Activated B cell treated with CpG ODN at 0.5 μM for 24 hours (primary cell): ENCODE measurements at regions of chr21 and their contacts with region 1.

Region 1: GRCh38 chr21:36976882-36977651 is 10.6 kb upstream of the HLCS start:
- DNase-seq: peak; percentile 30
- ATAC-seq: peak; percentile 84
- H3K4me3 Mint-ChIP-seq: peak overlapping the region; percentile 48
- H3K27ac Mint-ChIP-seq: peak overlapping the region; percentile 57
- H3K4me1 Mint-ChIP-seq: peaks cover 24% of the 10 kb centered on the region
- H3K27me3 Mint-ChIP-seq: peaks cover 4% of the 10 kb centered on the region
- CTCF ChIP-seq: no peak

Region 2: DNA sequence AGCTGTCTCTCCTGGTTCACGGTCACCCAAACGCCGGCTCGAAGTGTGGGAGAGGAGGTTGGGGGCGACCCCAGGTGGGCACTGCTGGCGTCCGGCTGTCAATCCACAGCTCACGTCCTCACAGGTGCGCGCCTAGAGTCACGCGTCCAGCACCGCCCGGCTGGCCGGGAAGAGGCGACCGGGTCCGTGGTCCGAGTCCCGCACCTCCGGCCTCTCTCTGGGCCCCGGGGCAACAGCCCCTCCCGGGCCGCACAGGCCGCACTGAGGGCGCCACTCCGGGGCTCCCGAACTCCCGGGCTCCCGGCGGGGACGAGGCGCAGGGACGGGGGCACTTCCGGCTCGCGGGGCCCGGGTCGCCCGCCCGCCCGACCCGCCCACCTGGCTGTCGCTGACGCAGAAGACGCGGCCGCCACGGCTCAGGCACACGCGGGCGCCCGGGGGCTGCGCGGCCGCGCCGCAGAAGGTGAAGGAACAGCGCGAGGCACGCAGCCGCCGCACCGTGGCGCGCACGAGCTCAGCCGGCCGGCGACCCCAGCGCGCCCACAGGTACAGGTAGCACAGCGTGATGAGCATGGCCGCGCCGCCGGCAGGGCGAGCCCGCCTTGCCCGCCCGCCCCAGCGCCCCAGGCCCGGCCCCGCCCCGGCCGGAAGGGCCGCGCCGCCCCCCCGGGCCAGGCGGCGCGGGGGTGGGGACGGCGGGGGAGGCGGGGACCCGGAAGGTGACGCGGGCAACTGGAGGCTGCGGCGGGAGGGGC is 10.8 kb before region 1 on chr21 and contains the start of gene HLCS:
- CTCF ChIA-PET with region 1: interaction called, 16 read pairs
- POLR2A ChIA-PET with region 1: interaction called, 15 read pairs
- intact Hi-C with region 1: no loop called
- DNase-seq: peak; percentile 77
- ATAC-seq: peak; percentile 92
- H3K4me3 Mint-ChIP-seq: peak within 1 kb of the TSS; percentile 85
- H3K27ac Mint-ChIP-seq: peak within 1 kb of the TSS; percentile 80
- H3K4me1 Mint-ChIP-seq: peaks cover 20% of the 10 kb centered on the region
- H3K27me3 Mint-ChIP-seq: no peaks in the 10 kb centered on the region
- CTCF ChIP-seq: no peak
- total RNA-seq, gene HLCS: 8.1 and 10.6 TPM in 2 replicates

Region 3: GRCh38 chr21:36989699-36990507 is 12.8 kb after region 1 on chr21:
- CTCF ChIA-PET with region 1: interaction called, 24 read pairs
- POLR2A ChIA-PET with region 1: interaction called, 21 read pairs
- intact Hi-C with region 1: loop called (anchors 1 kb)
- DNase-seq: peak; percentile 91
- ATAC-seq: peak; percentile 92
- H3K4me3 Mint-ChIP-seq: peak overlapping the region; percentile 83
- H3K27ac Mint-ChIP-seq: peak overlapping the region; percentile 80
- H3K4me1 Mint-ChIP-seq: peaks cover 10% of the 10 kb centered on the region
- H3K27me3 Mint-ChIP-seq: no peaks in the 10 kb centered on the region
- CTCF ChIP-seq: peak; percentile 27

Region 4: DNA sequence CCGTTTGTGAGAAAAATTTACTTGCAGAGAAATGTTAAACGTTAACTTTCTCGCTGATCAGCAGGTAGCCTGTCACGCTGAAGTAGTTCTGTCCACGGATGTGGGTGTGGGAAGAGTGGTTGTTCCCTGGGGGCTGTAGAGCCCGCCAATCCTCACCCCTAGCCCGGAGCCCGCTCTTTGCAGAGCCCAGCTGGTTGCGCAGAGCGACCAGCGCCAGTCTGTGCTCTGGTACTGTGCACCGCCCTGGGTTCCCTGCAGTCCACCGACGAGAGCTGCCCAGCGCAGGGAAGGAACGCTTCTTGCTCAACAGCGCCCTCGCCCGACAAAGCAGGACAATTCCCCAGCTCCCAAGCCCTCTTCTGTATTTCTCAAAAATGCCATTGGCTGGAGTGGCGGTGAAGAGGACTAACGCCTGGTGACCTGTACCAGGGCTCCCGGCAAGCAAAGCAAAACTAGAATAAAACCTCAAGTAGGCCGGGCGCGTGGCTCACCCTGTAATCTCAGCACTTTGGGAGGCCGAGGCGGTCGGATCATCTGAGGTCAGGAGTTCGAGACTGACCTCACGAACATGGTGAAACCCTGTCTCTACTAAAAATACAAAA is 32.8 kb after region 1 on chr21:
- CTCF ChIA-PET with region 1: interaction called, 11 read pairs
- POLR2A ChIA-PET with region 1: no interaction called
- intact Hi-C with region 1: loop called (anchors 1 kb)
- DNase-seq: peak; percentile 62
- ATAC-seq: peak; percentile 85
- H3K4me3 Mint-ChIP-seq: peak overlapping the region; percentile 39
- H3K27ac Mint-ChIP-seq: no peak overlapping the region
- H3K4me1 Mint-ChIP-seq: peaks cover 19% of the 10 kb centered on the region
- H3K27me3 Mint-ChIP-seq: peaks cover 46% of the 10 kb centered on the region
- CTCF ChIP-seq: no peak

Region 5: GRCh38 chr21:37087188-37087587 is 110.1 kb after region 1 on chr21:
- CTCF ChIA-PET with region 1: interaction called, 3 read pairs
- POLR2A ChIA-PET with region 1: no interaction called
- intact Hi-C with region 1: loop called (anchors 1 kb)
- DNase-seq: no peak
- ATAC-seq: no peak
- H3K4me3 Mint-ChIP-seq: no peak overlapping the region
- H3K27ac Mint-ChIP-seq: no peak overlapping the region
- H3K4me1 Mint-ChIP-seq: peaks cover 17% of the 10 kb centered on the region
- H3K27me3 Mint-ChIP-seq: no peaks in the 10 kb centered on the region
- CTCF ChIP-seq: no peak

Region 6: DNA sequence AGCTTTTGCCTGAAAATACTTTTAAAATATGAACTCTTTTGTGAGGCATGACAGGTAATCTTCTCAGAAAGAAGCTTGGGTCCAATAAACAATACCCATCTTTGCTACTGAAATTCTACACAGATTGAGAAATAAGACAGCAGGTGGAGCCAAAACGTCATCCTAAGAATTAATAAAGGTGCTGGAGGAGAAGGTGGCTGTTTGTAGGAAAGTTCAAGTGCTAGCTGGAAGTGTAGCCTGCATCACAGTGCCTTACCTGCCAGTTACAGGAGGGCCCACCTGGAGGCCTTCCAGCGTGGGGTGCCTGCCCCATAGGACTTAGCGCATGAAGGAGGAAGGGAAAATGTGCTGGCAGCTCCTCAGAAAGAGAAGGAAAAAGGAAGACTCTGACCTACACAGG is 189.7 kb after region 1 on chr21:
- CTCF ChIA-PET with region 1: no interaction called
- POLR2A ChIA-PET with region 1: no interaction called
- intact Hi-C with region 1: loop called (anchors 10 kb)
- DNase-seq: no peak
- ATAC-seq: no peak
- H3K4me3 Mint-ChIP-seq: no peak overlapping the region
- H3K27ac Mint-ChIP-seq: peak overlapping the region; percentile 19
- H3K4me1 Mint-ChIP-seq: no peaks in the 10 kb centered on the region
- H3K27me3 Mint-ChIP-seq: no peaks in the 10 kb centered on the region
- CTCF ChIP-seq: no peak